Activated naive CD4-positive, alpha-beta T cell treated with anti-CD3 and anti-CD28 coated beads for 36 hours (primary cell): ENCODE measurements at regions of chr5 and their contacts with region 1.

Region 1: DNA sequence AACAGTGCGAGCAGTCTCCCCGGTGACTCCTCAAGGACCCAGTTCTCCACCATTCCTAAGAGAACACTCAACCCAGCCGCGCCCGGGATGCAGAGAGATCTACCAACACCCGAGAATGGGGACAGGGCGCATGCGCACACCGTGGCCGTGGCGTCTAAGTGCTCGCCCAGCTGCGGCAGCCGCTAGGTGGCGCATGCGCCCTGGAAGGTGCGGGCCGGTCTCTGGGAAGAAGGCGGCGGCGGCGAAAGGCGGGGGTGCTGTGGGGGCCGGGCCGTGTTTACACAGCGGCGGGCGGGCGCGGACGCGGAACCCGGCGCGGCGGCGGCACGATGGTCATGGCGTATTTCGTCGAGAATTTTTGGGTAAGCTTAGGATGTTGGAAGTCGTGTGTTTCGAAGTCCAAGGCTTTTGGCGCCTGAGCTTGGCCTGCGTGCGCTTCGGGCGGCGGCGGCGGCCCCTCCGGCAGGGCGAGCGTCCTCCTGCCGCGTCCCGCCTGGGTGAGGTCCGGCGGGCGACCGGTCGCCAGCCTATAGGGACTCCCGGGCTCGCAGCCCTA is at the start of gene FCHO2:
- DNase-seq: peak; percentile 95
- H3K4me3 Mint-ChIP-seq: peak within 1 kb of the TSS; percentile 91
- H3K27ac Mint-ChIP-seq: peak within 1 kb of the TSS; percentile 63
- H3K4me1 Mint-ChIP-seq: peaks cover 10% of the 10 kb centered on the region
- H3K27me3 Mint-ChIP-seq: peaks cover 47% of the 10 kb centered on the region
- total RNA-seq, gene FCHO2: 0.54 to 0.93 TPM

Region 2: GRCh38 chr5:72611118-72611730 is 344.6 kb before region 1 on chr5:
- CTCF ChIA-PET with region 1: interaction called, 4 read pairs
- intact Hi-C with region 1: loop called (anchors 5 kb)
- DNase-seq: peak; percentile 60
- H3K4me3 Mint-ChIP-seq: no peak overlapping the region
- H3K27ac Mint-ChIP-seq: no peak overlapping the region
- H3K4me1 Mint-ChIP-seq: peaks cover 3% of the 10 kb centered on the region
- H3K27me3 Mint-ChIP-seq: peaks cover 2% of the 10 kb centered on the region

Region 3: GRCh38 chr5:73088026-73088425 is 132.2 kb after region 1 on chr5:
- CTCF ChIA-PET with region 1: no interaction called
- intact Hi-C with region 1: loop called (anchors 1 kb)
- DNase-seq: no peak
- H3K4me3 Mint-ChIP-seq: no peak overlapping the region
- H3K27ac Mint-ChIP-seq: no peak overlapping the region
- H3K4me1 Mint-ChIP-seq: no peaks in the 10 kb centered on the region
- H3K27me3 Mint-ChIP-seq: peaks cover 20% of the 10 kb centered on the region